ENCODE measurements at regions of chr1 and their contacts with region 1.

Region 1: GRCh38 chr1:32179443-32180185 is at the start of gene TXLNA:
- DNase-seq: no peak
- H3K4me3 ChIP-seq: peak within 1 kb of the TSS; percentile 71
- CTCF ChIP-seq: peak; percentile 45

Region 2: DNA sequence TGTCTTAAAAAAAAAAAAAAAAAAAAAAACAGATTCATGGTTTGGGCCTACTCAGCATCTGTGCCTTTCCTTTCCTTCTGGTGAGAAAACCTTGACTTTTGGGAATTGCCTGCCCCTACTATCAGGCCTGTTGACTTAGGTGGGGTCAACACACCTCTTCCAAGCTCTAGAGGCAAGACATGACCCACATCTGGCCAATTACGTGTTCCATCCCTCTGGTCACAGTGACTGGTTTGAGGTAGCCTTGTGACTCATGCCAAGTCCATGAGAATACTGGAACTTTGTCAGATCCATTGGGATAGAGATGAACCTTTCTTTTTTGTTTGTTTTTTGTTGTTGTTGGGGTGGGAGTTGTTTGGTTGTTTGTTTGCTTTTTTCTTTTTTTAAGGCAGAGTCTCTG is 203.2 kb before region 1 on chr1:
- CTCF ChIA-PET with region 1: no interaction called
- POLR2A ChIA-PET with region 1: no interaction called
- DNase-seq: no peak
- H3K4me3 ChIP-seq: no peak overlapping the region
- CTCF ChIP-seq: no peak

Region 3: GRCh38 chr1:32072622-32073298 is 106.9 kb before region 1 on chr1 and contains the start of gene TMEM39B:
- CTCF ChIA-PET with region 1: no interaction called
- POLR2A ChIA-PET with region 1: interaction called, 11 read pairs
- DNase-seq: no peak
- H3K4me3 ChIP-seq: peak within 1 kb of the TSS; percentile 95
- CTCF ChIP-seq: no peak

Region 4: DNA sequence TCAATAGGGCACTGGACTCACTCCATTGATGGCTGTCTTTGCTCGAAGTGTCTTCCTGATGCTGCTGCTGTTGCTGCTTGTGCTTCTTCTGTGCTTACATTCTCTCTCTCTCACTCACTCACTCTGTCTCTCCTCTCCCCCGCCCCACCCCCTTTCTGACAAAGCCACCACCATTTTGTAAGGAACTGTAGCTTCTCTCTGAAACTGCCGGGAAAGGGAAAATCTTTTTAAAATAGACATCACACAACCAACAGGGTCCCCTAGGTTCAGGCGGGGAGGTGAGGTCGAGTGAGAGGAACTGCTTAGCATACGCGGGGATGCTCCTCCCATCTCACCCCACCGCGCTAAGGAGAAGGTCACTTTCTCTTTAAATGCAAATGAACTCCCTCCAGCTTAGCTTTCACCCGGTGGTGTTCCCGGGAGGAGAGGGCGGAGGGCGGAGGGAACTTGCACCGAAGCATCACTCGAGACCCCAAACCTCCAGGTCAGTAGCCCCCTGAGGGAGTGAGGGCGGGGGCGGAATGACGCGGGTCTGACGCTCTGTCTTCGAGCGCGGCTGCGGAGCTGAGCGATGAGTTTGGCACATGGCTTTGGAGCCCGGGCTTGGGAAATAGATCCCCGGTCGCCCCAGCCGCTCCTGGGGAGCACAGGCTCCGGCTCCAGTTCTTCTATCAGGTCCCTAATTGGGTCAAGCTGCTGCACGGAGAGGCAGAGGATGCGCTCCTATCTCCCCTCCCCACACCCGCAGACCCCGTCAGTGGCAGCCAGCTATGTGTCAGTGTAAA is 20.8 kb after region 1 on chr1 and contains the start of gene CCDC28B:
- CTCF ChIA-PET with region 1: interaction called, 5 read pairs
- POLR2A ChIA-PET with region 1: interaction called, 18 read pairs
- DNase-seq: no peak
- H3K4me3 ChIP-seq: peak within 1 kb of the TSS; percentile 78
- CTCF ChIP-seq: no peak